Posterior cingulate gyrus (tissue), 11 donors: ENCODE measurements at regions of chr17 and their contacts with region 1.

Region 1: DNA sequence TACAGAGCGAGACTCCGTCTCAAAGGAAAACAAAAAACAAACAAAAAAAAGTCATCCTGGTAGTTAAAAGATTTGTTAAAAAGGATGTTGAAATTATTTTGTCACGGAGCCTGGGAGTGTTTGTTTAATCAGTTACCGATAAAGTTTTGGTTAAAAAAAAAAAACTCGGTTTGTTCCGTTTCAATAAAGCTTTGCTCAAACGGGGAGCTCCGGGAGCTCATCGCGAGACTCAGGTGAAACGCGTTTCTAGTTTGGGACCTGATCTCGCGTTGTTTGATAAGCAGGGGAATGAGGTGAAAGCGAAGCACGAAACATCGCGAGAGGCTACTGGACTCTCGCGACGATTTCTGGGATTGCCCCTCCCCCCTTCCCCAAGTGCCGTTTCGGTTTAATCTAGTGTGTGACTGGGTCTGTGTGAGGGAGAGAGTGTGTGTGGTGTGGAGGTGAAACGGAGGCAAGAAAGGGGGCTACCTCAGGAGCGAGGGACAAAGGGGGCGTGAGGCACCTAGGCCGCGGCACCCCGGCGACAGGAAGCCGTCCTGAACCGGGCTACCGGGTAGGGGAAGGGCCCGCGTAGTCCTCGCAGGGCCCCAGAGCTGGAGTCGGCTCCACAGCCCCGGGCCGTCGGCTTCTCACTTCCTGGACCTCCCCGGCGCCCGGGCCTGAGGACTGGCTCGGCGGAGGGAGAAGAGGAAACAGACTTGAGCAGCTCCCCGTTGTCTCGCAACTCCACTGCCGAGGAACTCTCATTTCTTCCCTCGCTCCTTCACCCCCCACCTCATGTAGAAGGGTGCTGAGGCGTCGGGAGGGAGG is at the start of gene CDK12:
- DNase-seq: peak; percentile 89 to 99 (median 93)

Region 2: GRCh38 chr17:39401412-39402243 is 59.7 kb before region 1 on chr17 and contains the start of gene FBXL20:
- intact Hi-C with region 1: loop called (anchors 5 kb)
- DNase-seq: peak; percentile 85 to 98 (median 90)

Region 3: GRCh38 chr17:39450847-39451581 is 10.3 kb before region 1 on chr17 and contains the start of gene MED1:
- intact Hi-C with region 1: loop called (anchors 1 kb)
- DNase-seq: peak; percentile 73 to 98 (median 86)